Ascending aorta (tissue), 2 donors: ENCODE measurements at regions of chr1 and their contacts with region 1.

Region 1: DNA sequence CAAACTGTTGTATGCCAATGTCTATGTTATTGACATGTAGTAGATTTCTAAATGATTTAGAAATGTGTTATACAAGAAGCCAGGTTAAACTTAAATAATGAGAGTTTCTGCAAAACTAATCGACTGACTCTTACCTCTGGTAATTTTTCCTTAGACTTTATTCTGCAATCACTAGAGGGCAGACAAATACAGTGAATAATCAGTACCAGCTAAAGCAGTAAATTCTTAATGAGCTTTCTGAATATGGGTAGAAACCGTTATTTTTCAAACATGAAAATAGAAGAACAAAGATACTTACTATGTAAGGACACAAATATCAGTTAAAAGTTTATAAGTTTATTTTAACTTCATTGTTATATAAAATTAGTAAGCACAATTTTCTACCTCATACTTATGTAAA is 97.9 kb upstream of the RGS1 start:
- DNase-seq: no peak
- H3K4me3 ChIP-seq: no peak overlapping the region
- H3K27ac ChIP-seq: no peak overlapping the region
- H3K4me1 ChIP-seq: no peaks in the 10 kb centered on the region
- H3K27me3 ChIP-seq: no peaks in the 10 kb centered on the region
- CTCF ChIP-seq: peak; percentile 40 to 71 (median 64)

Region 2: DNA sequence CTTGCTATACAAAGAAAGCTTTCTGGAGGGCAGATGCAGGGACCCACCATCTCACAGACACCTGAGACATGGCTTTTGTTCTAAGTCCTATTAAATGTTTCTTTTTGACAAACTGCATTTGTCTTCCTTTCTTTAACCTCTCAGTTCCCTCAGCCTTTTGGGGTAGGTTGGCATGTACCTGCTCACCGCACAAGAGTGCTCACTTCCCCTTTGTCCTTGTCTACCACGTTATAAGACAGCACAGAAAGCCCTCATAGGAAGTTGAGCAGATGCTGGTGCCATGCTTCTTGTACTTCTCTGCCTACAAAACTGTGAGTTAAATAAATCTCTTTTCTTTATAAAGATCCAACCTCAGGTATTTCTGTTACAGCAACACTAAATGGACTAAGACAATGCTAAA is 192.7 kb before region 1 on chr1:
- intact Hi-C with region 1: no loop called
- DNase-seq: no peak
- H3K4me3 ChIP-seq: no peak overlapping the region
- H3K27ac ChIP-seq: no peak overlapping the region
- H3K4me1 ChIP-seq: no peaks in the 10 kb centered on the region
- H3K27me3 ChIP-seq: no peaks in the 10 kb centered on the region
- CTCF ChIP-seq: no peak

Region 3: GRCh38 chr1:192550922-192551534 is 73.4 kb after region 1 on chr1:
- intact Hi-C with region 1: no loop called
- DNase-seq: no peak
- H3K4me3 ChIP-seq: no peak overlapping the region
- H3K27ac ChIP-seq: peak overlapping the region in 1 of 2 donors; percentile 38
- H3K4me1 ChIP-seq: peaks cover 0 to 7% of the 10 kb centered on the region in 2 donors
- H3K27me3 ChIP-seq: no peaks in the 10 kb centered on the region
- CTCF ChIP-seq: no peak

Region 4: GRCh38 chr1:192580351-192580962 is 102.8 kb after region 1 on chr1:
- intact Hi-C with region 1: loop called (anchors 1 kb)
- DNase-seq: no peak
- H3K4me3 ChIP-seq: no peak overlapping the region
- H3K27ac ChIP-seq: no peak overlapping the region
- H3K4me1 ChIP-seq: no peaks in the 10 kb centered on the region
- H3K27me3 ChIP-seq: no peaks in the 10 kb centered on the region
- CTCF ChIP-seq: peak; percentile 39 to 64 (median 50)

Region 5: DNA sequence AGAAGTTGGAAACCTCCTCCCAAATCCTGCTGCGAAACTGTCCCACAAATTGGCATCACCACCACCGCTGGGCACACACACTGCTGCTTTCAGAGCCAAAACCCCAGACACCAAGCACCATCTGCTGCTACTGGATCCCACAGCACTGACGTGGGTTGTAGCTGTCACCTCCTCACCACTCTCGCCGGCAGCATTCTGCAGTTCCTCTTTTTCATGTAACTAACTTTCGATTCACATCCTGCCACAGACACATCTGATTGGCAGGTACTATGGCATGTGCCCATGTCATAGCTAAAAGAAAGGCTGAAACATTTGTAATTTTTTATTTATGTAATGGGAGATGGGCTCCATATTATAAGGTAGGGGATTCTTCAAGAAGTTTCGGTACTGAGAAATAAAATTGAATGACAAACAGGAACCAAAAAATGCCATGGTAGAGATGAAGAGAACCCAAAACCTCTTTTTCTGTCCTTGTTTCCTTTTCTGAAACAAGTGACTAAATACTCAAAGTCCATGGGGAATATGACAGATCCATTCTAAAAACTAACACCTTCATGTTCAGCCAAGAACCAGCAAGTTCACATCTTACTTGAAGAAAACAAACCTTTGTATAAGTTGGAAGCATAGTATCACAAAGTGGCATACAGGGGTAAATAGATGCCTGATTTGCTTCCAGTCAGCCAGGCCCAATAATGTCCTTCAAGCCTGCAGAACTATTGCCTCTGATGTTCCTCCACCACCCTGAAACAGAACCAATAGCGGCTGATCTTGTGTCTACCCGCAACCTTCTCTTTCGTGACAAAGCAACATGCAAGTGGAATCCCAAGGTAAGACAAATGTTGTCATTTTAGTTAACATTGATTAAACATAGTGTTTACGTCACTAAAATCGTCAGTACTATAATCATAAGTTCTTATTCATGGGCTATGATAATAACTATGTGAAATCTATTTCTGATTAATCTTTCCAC is 131.8 kb after region 1 on chr1:
- intact Hi-C with region 1: loop called (anchors 2 kb)
- DNase-seq: peak; percentile 63 to 83
- H3K4me3 ChIP-seq: no peak overlapping the region
- H3K27ac ChIP-seq: no peak overlapping the region
- H3K4me1 ChIP-seq: no peaks in the 10 kb centered on the region
- H3K27me3 ChIP-seq: no peaks in the 10 kb centered on the region
- CTCF ChIP-seq: no peak

Region 6: GRCh38 chr1:193019442-193020026 is 541.9 kb after region 1 on chr1:
- intact Hi-C with region 1: loop called (anchors 2 kb)
- DNase-seq: no peak
- H3K4me3 ChIP-seq: no peak overlapping the region
- H3K27ac ChIP-seq: no peak overlapping the region
- H3K4me1 ChIP-seq: no peaks in the 10 kb centered on the region
- H3K27me3 ChIP-seq: no peaks in the 10 kb centered on the region
- CTCF ChIP-seq: peak in 2 of 3 experiments; percentile 49 to 59

Region 7: GRCh38 chr1:193059268-193060225 is 581.9 kb after region 1 on chr1 and contains the starts of genes RO60 and UCHL5:
- intact Hi-C with region 1: loop called (anchors 5 kb)
- DNase-seq: peak; percentile 95 to 98
- H3K4me3 ChIP-seq: peak within 1 kb of the TSS; percentile 77 to 83
- H3K27ac ChIP-seq: peak within 1 kb of the TSS; percentile 96
- H3K4me1 ChIP-seq: peaks cover 3 to 26% of the 10 kb centered on the region in 2 donors
- H3K27me3 ChIP-seq: no peaks in the 10 kb centered on the region
- CTCF ChIP-seq: no peak
- total RNA-seq, gene RO60: 56.2 TPM
- total RNA-seq, gene UCHL5: 4.2 TPM

Region 8: GRCh38 chr1:193121616-193122593 is 644.3 kb after region 1 on chr1 and contains the start of gene CDC73:
- intact Hi-C with region 1: loop called (anchors 5 kb)
- DNase-seq: peak; percentile 91 to 99
- H3K4me3 ChIP-seq: peak within 1 kb of the TSS; percentile 70 to 78
- H3K27ac ChIP-seq: peak within 1 kb of the TSS; percentile 95
- H3K4me1 ChIP-seq: peaks cover 5 to 15% of the 10 kb centered on the region in 2 donors
- H3K27me3 ChIP-seq: no peaks in the 10 kb centered on the region
- CTCF ChIP-seq: peak; percentile 89 to 99 (median 93)
- total RNA-seq, gene CDC73: 26.5 TPM